ENCODE measurements at regions of chr3 and their contacts with region 1.

Region 1: DNA sequence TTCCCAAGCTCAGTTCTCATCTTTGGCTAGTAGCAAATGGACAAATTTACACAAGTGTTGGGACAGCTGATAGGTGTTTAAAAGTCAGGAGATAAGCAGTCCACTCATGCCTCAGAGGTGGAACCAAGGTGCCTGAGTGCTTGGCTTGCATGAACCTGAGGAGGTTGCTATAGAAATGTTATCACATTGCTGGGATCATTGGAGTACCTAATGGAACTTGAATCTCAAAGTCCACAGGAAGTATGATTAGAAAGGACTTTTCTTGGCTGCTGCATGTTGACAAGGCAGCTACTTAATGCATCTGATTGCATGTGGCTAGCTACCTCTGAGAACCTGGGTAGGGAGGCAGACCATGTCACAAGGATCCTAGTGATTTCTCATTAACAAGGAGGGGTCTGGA is 39.5 kb upstream of the C3orf80 start:
- DNase-seq: no peak
- H3K4me3 ChIP-seq: peak overlapping the region in 1 of 7 experiments; percentile 14
- H3K27ac ChIP-seq: peak overlapping the region in 1 of 2 experiments; percentile 36
- H3K4me1 ChIP-seq: peaks cover 28 to 58% (median 44%) of the 10 kb centered on the region in 4 experiments
- H3K27me3 ChIP-seq: no peaks in the 10 kb centered on the region

Region 2: GRCh38 chr3:160200353-160200752 is 14.6 kb after region 1 on chr3:
- CTCF ChIA-PET with region 1: interaction called, 14 read pairs
- POLR2A ChIA-PET with region 1: no interaction called
- DNase-seq: peak in 2 of 3 donors; percentile 47 to 54
- H3K4me3 ChIP-seq: no peak overlapping the region
- H3K27ac ChIP-seq: no peak overlapping the region
- H3K4me1 ChIP-seq: no peaks in the 10 kb centered on the region
- H3K27me3 ChIP-seq: no peaks in the 10 kb centered on the region